ENCODE measurements at regions of chr20 and their contacts with region 1.

Region 1: GRCh38 chr20:50438986-50439407 is 71.2 kb upstream of the PTPN1 start:
- DNase-seq: peak; percentile 99
- ATAC-seq: peak; percentile 79
- H3K4me3 ChIP-seq: no peak overlapping the region
- H3K27ac ChIP-seq: peak overlapping the region; percentile 95
- H3K4me1 ChIP-seq: peaks cover 45% of the 10 kb centered on the region
- H3K27me3 ChIP-seq: no peaks in the 10 kb centered on the region
- CTCF ChIP-seq: no peak

Region 2: GRCh38 chr20:50403565-50404426 is 35.2 kb before region 1 on chr20:
- CTCF ChIA-PET with region 1: no interaction called
- POLR2A ChIA-PET with region 1: no interaction called
- intact Hi-C with region 1: no loop called
- DNase-seq: no peak
- ATAC-seq: peak; percentile 35; the same call in 1 of the 2 replicates
- H3K4me3 ChIP-seq: no peak overlapping the region
- H3K27ac ChIP-seq: no peak overlapping the region
- H3K4me1 ChIP-seq: peaks cover 17% of the 10 kb centered on the region
- H3K27me3 ChIP-seq: no peaks in the 10 kb centered on the region
- CTCF ChIP-seq: no peak

Region 3: DNA sequence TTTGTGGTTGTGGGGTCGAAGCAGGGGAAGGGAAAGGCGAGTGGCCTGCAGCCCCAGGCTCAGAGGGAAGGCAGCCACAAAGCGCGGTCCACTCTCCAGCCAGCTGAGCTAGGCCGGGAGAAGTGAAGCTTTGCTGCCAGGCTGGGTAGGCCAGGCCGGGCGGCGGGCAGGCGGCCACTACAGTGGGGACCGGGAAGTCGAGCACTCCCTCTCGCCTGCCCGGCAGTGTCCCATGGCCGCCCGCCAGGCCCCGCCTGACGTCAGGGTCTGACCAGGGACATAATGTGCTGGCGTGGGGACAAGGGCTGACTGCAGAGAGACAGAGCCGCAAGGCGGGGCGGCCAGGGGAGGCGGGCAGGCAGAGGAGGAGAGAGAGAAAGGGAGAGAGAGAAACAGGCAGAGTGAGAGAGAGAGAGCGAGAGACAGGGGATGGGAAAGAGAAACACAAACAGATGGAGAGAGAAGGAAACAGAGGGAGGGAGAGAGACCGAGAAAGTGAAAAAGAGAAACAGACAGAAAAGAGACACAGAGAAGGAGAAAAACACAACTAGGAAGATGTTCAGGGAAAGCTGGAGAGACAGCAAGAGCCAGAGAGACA is 23.4 kb before region 1 on chr20:
- CTCF ChIA-PET with region 1: interaction called, 3 read pairs
- POLR2A ChIA-PET with region 1: no interaction called
- intact Hi-C with region 1: loop called (anchors 1 kb)
- DNase-seq: peak; percentile 95
- ATAC-seq: peak; percentile 90
- H3K4me3 ChIP-seq: peak overlapping the region; percentile 36; the same call in 1 of the 2 replicates
- H3K27ac ChIP-seq: peak overlapping the region; percentile 96
- H3K4me1 ChIP-seq: peaks cover 54% of the 10 kb centered on the region
- H3K27me3 ChIP-seq: no peaks in the 10 kb centered on the region
- CTCF ChIP-seq: no peak; the same call in 1 of the 2 replicates

Region 4: DNA sequence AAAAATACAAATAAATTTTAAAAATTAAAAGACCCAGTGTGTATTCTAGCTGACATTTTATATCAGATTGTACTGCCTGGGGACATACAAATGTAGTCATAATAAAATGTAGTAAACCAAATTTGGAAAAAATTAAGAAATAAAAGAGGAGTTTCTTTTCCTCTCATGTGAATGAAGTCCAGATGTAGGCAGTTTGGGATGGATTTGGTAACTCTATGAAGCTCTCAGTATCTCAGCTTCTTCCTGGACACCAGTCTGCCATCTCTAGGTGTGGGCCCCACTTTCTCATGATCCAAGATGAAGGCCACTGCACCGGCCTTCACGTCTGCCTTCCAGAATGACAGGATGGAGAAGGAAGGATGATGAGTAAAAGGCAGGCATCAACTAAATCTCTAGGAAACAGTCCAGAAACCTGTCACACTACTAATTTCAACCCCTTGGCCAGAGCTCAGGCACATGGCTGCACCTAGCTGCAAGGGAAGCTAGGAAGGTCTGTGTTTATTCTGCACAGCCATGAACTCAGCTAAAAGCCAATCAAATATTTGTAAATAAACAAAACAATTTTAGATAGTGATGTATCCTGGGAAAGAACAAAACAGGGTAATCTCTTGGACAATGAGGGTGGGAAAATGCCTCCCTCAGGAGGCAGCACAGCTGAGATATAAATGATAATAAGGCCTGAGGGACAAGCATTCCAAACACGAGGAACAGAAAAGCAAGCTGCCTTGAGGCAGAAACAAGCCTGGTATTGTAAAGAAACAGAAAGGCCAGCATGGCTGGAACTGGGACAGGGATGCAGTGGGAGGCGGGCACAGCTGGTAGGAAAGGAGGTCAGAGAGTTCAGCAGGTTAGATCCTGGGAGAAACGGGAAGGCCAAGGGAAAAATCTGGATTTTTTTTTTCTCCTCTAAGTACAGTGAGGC is 17.4 kb before region 1 on chr20:
- CTCF ChIA-PET with region 1: no interaction called
- POLR2A ChIA-PET with region 1: no interaction called
- intact Hi-C with region 1: loop called (anchors 1 kb)
- DNase-seq: no peak
- ATAC-seq: no peak
- H3K4me3 ChIP-seq: no peak overlapping the region
- H3K27ac ChIP-seq: peak overlapping the region; percentile 96
- H3K4me1 ChIP-seq: peaks cover 34% of the 10 kb centered on the region
- H3K27me3 ChIP-seq: no peaks in the 10 kb centered on the region
- CTCF ChIP-seq: no peak

Region 5: GRCh38 chr20:50713657-50714101 is 274.7 kb after region 1 on chr20:
- CTCF ChIA-PET with region 1: no interaction called
- POLR2A ChIA-PET with region 1: no interaction called
- intact Hi-C with region 1: no loop called
- DNase-seq: peak; percentile 39
- ATAC-seq: peak; percentile 60
- H3K4me3 ChIP-seq: no peak overlapping the region
- H3K27ac ChIP-seq: no peak overlapping the region
- H3K4me1 ChIP-seq: peaks cover 13% of the 10 kb centered on the region
- H3K27me3 ChIP-seq: no peaks in the 10 kb centered on the region
- CTCF ChIP-seq: peak; percentile 59

Measured in PC-3 (cell line).